ENCODE measurements at regions of chr11 and their contacts with region 1.

Region 1: DNA sequence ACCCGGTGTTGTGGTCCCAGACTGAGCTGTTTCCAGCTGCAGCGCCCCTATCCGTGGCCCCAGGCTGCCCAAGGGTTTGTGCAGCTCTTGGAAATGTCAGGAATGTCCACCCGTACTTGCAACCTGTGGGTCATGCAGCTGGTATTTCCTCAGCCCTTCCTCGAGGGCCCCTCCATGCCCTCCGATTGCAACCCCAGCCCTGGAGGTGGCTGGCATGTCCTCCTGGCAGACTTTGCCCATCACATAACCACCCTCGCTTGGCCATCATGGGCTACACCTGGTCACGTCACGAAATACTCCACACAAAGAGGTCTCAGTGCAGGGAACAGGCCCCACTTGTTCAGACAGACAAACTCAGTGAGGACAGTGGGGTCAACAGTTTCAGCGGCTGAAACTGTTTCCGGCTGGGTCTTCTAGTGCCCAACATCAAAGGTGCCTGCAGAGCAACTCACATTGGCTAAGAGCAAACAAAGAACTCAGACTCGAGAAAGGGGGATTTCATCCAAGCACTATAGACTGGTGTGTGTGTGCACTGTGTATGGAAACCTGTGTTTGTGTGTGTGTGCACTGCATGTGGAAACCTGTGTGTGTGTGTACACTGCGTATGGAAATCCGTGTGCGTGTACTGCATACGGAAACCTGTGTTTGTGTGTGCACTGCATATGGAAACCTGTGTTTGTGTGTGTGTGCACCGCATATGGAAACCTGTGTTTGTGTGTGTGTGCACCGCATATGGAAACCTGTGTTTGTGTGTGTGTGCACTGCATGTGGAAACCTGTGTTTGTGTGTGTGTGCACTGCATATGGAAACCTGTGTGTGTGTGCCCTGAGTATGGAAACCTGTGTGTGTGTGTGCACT is 72.8 kb upstream of the CCND1 start:
- H3K4me3 Mint-ChIP-seq: no peak overlapping the region
- H3K27ac Mint-ChIP-seq: no peak overlapping the region
- H3K4me1 Mint-ChIP-seq: peaks cover 18% of the 10 kb centered on the region
- H3K27me3 Mint-ChIP-seq: peaks cover 22% of the 10 kb centered on the region

Region 2: GRCh38 chr11:69500285-69501132 is 67.7 kb before region 1 on chr11:
- intact Hi-C with region 1: loop called (anchors 10 kb)
- H3K4me3 Mint-ChIP-seq: no peak overlapping the region
- H3K27ac Mint-ChIP-seq: no peak overlapping the region
- H3K4me1 Mint-ChIP-seq: peaks cover 11% of the 10 kb centered on the region
- H3K27me3 Mint-ChIP-seq: peaks cover 23% of the 10 kb centered on the region